WTC11 (cell line): ENCODE measurements at regions of chr19 and their contacts with region 1.

Region 1: GRCh38 chr19:17292286-17293097 is 10.7 kb downstream of the ABHD8 start:
- DNase-seq: peak; percentile 92
- ATAC-seq: peak; percentile 90
- H3K4me3 Mint-ChIP-seq: peak overlapping the region; percentile 79
- H3K27ac Mint-ChIP-seq: peak overlapping the region; percentile 94
- H3K4me1 Mint-ChIP-seq: peaks cover 10% of the 10 kb centered on the region
- H3K27me3 Mint-ChIP-seq: no peaks in the 10 kb centered on the region; the same call in 1 of the 2 replicates
- CTCF ChIP-seq: no peak

Region 2: DNA sequence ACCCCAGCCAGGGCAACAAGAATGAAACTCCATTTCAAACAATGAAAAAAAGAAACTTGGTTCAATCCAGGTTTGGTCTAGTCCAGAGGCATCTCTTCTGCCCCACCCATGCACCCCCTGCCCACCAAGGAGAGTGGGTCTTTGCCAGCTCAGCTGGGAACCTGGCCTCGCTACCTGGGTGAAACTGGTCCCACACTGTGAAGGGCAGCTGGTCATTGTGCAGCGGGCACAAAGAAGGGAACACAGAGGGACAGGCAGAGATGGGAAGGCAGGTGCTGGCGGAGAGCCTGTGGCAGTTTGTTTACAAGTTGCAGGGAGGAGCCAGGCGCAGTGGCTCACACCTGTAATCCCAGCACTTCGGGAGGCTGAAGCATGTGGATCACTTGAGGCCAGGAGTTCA is 316.1 kb before region 1 on chr19:
- CTCF ChIA-PET with region 1: no interaction called
- POLR2A ChIA-PET with region 1: no interaction called
- DNase-seq: no peak
- ATAC-seq: no peak
- H3K4me3 Mint-ChIP-seq: no peak overlapping the region
- H3K27ac Mint-ChIP-seq: no peak overlapping the region
- H3K4me1 Mint-ChIP-seq: no peaks in the 10 kb centered on the region
- H3K27me3 Mint-ChIP-seq: no peaks in the 10 kb centered on the region
- CTCF ChIP-seq: no peak

Region 3: DNA sequence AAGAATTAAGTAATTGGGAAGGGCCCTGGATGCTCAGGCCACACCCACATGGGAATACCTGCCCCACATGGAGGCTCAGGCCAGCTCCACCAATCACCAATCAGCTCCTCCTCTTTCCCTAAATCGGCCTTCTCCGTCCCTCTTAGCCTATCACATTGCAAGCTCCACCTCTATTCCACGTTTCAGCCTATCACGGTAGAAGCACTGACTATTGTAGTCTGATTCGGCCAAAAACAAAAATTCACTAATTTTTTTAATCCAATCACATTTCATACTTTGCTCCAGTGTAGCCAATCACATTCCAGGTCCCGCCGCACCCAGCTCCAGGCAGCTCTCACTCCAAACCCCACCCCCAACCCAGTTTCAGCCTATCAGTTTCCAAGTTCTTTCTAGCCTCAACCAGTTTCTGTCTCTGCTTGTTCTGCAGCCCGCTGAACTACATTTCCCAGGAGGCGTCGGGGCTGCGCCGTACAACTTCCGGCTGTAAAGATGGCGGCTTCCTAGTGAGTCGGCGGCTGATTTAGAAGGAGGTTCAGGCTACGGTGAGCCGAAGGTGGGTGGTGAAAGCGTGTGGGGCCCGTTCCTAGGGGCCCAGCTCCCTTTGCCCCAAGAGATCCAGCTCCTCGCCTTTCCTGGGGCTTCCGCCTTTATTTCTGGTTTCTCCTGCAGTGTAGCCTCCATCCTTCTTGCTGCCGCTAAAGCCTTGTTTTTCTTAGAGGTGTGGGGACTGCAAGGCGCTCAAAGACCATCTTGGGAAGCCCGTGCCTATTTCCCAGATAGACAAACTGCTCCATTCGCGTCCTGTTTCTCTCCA is 25.3 kb before region 1 on chr19 and contains the start of gene BABAM1:
- CTCF ChIA-PET with region 1: interaction called, 11 read pairs
- POLR2A ChIA-PET with region 1: interaction called, 3 read pairs
- DNase-seq: peak; percentile 96
- ATAC-seq: peak; percentile 95
- H3K4me3 Mint-ChIP-seq: peak within 1 kb of the TSS; percentile 96
- H3K27ac Mint-ChIP-seq: peak within 1 kb of the TSS; percentile 92
- H3K4me1 Mint-ChIP-seq: peaks cover 20% of the 10 kb centered on the region
- H3K27me3 Mint-ChIP-seq: no peaks in the 10 kb centered on the region
- CTCF ChIP-seq: no peak
- total RNA-seq, gene BABAM1: 139 to 147 TPM (median 146 TPM) in 3 replicates

Region 4: DNA sequence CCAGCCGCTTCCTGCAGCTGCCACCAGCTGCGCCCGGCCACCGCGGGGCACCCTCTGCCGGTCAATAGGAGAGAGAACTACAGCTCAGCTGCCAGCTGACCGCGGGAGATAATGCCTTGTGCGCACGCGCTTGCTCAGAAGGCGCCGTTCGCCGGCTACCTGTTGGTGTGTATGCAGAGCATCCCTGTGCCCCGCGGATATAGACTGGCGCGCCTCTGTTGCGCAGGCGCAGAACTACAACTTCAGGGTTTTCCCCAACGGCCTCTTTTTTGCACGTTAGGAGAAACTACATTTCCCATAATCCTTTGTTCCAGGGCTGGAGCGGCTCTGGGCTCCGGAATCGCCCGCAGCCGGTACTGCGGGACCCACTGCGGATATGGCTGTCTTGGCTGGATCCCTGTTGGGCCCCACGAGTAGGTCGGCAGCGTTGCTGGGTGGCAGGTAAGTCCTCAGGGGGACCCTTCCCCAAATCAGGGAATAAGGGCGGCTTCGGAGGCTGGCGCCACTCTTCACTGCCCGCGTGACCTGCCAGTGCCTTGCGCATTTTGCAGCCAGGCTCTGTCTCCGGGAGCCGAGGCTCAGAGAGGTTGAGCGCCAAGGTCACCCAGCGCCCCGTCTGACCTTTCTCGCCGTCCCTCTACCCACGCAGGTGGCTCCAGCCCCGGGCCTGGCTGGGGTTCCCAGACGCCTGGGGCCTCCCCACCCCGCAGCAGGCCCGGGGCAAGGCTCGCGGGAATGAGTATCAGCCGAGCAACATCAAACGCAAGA is 13.2 kb after region 1 on chr19 and contains the start of gene MRPL34:
- CTCF ChIA-PET with region 1: interaction called, 60 read pairs
- POLR2A ChIA-PET with region 1: interaction called, 17 read pairs
- DNase-seq: peak; percentile 99
- ATAC-seq: peak; percentile 51
- H3K4me3 Mint-ChIP-seq: peak within 1 kb of the TSS; percentile 89
- H3K27ac Mint-ChIP-seq: peak within 1 kb of the TSS; percentile 91
- H3K4me1 Mint-ChIP-seq: peaks cover 45% of the 10 kb centered on the region
- H3K27me3 Mint-ChIP-seq: no peaks in the 10 kb centered on the region
- CTCF ChIP-seq: no peak; the same call in 1 of the 2 replicates
- total RNA-seq, gene MRPL34: 117 to 130 TPM (median 122 TPM) in 3 replicates

Region 5: DNA sequence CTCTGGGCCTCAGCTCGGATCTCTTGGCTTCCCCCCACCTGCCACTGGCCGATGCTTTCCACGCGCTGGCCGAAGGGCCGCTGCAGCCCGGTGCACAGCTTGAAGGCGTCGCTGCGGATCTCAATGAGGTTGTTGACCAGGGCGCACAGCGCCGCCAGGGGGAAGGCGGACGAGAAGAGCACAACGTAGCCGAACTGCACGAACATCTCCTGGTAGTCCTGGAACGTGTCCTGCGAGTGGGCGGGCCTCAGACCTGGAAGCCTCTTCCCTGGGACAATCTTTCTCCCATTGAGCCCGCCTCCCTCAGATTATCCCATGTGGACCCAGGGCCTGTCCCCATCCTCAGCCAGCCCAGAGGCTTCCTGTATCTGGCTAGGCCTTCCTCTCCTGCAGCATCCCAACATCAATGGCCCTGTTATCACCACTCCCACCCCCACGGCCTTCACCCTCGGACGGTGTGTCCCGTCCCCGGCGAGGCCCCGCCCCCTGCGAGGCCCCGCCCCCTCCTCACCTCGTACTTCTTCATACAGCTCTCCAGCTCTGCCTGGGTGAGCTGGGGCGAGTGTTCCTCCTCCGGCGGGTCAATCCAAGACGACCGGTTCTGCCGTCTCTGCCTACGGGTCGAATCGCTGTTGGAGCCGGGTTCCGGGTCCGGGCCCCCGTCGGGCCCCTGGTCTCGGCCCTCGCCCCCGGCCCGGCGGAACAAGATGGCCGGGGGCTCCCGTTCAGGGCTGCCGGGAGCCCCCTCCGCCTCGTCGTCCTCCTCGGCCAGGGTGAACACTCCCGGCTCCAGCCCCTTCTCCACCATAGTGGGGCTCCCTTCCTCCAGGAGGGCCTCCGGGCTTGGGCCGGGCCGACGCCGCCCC is 35.4 kb after region 1 on chr19:
- CTCF ChIA-PET with region 1: interaction called, 20 read pairs
- POLR2A ChIA-PET with region 1: interaction called, 7 read pairs
- DNase-seq: peak; percentile 93
- ATAC-seq: peak; percentile 72
- H3K4me3 Mint-ChIP-seq: peak overlapping the region; percentile 84
- H3K27ac Mint-ChIP-seq: peak overlapping the region; percentile 98
- H3K4me1 Mint-ChIP-seq: peaks cover 16% of the 10 kb centered on the region
- H3K27me3 Mint-ChIP-seq: peaks cover 5% of the 10 kb centered on the region
- CTCF ChIP-seq: 0 out of 2 replicates have a peak, but pooled peaks have one; percentile 17

Region 6: DNA sequence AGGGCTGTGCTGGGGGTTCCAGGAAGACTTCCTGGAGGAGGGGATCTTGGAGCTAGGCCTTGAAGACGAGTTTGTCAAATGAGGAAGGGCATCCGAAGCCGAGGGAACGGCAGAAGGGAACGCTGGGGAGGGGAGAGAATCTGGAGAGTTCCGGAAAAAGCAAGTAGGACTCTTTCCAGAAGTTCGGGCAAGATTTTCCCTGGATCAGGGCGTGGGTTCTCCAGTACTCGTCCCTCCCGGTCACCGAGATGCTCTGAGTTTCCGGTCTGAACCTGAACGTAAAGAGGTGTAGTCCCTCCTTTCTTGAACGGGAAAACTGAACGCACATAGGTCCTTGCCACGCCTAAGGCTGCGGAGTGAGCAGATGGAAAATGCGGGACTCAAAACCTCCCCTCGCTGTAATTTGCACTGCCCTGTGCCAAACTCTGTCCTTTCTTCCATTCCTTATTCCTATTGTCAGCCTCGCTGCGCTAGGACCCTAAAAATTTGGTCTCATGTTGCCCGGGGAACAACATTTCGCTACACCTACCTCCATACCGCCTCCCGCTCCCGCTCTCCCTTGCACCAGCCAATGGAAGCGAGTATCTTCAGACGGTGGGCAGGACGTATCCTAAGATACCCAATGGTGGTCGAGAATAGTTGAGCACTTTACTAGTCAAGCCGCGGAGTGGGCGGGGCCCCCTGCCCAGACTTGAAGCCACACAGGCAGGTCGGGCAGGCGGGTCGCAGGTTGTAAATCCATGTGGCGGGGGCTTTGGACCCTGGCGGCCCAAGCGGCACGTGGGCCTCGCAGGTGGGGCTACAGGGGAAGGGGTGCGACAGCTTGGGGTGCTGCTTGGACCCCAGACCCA is 44.6 kb after region 1 on chr19 and contains the start of gene GTPBP3:
- CTCF ChIA-PET with region 1: interaction called, 12 read pairs
- POLR2A ChIA-PET with region 1: interaction called, 7 read pairs
- DNase-seq: peak; percentile 98
- ATAC-seq: peak; percentile 67
- H3K4me3 Mint-ChIP-seq: peak within 1 kb of the TSS; percentile 99
- H3K27ac Mint-ChIP-seq: peak within 1 kb of the TSS; percentile 99
- H3K4me1 Mint-ChIP-seq: peaks cover 48% of the 10 kb centered on the region
- H3K27me3 Mint-ChIP-seq: peaks cover 2% of the 10 kb centered on the region; the same call in 1 of the 2 replicates
- CTCF ChIP-seq: no peak
- total RNA-seq, gene GTPBP3: 79.1 to 93.0 TPM (median 80.8 TPM) in 3 replicates